CD4-positive, alpha-beta T cell (primary cell): ENCODE measurements at regions of chr18 and their contacts with region 1.

Region 1: GRCh38 chr18:35972197-35973052 is at the start of gene RMP24:
- DNase-seq: peak; percentile 86 to 97 (median 92)
- ATAC-seq: peak; percentile 82
- H3K4me3 ChIP-seq: peak within 1 kb of the TSS; percentile 73
- H3K4me3 Mint-ChIP-seq: peak within 1 kb of the TSS; percentile 97
- H3K27ac ChIP-seq: peak within 1 kb of the TSS; percentile 84 to 88
- H3K27ac Mint-ChIP-seq: peak within 1 kb of the TSS; percentile 96
- H3K4me1 ChIP-seq: peaks cover 34% of the 10 kb centered on the region
- H3K4me1 Mint-ChIP-seq: peaks cover 72% of the 10 kb centered on the region
- H3K27me3 ChIP-seq: no peaks in the 10 kb centered on the region
- H3K27me3 Mint-ChIP-seq: no peaks in the 10 kb centered on the region
- CTCF ChIP-seq: no peak

Region 2: DNA sequence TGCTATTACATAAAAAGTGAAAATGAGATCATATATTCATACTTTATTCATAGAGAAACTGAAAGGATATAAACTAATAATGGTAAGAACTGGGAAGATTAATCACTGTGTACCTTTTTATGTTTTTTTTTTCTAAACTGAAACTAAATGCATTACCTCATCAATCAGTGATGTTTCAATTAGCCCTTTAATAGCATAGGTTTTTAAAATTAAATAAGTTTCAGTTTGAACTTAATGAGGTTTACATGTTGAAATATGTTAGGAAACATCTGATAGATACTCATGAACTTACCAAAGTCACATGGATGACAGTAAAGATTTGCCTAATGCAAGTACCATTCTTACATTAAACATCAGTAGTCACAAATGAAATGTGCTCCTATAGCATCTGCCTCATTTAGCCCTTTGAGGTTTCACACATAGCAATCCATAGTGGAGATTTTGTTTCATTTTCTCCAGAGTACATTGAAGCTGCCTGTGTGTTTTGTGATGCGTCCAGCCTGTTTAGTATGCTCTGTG is 922.3 kb before region 1 on chr18:
- CTCF ChIA-PET with region 1: no interaction called
- POLR2A ChIA-PET with region 1: no interaction called
- intact Hi-C with region 1: loop called in 1 of 2 experiments (anchors 10 kb)
- DNase-seq: peak in 1 of 14 experiments; percentile 28
- ATAC-seq: peak; percentile 15
- H3K4me3 ChIP-seq: no peak overlapping the region
- H3K4me3 Mint-ChIP-seq: peak overlapping the region; percentile 83
- H3K27ac ChIP-seq: no peak overlapping the region
- H3K27ac Mint-ChIP-seq: peak overlapping the region; percentile 83
- H3K4me1 ChIP-seq: peaks cover 34% of the 10 kb centered on the region
- H3K4me1 Mint-ChIP-seq: peaks cover 88% of the 10 kb centered on the region
- H3K27me3 ChIP-seq: no peaks in the 10 kb centered on the region
- H3K27me3 Mint-ChIP-seq: no peaks in the 10 kb centered on the region
- CTCF ChIP-seq: no peak

Region 3: GRCh38 chr18:35290073-35290735 is 682.2 kb before region 1 on chr18 and contains the start of gene ZSCAN30:
- CTCF ChIA-PET with region 1: no interaction called
- POLR2A ChIA-PET with region 1: interaction called, 4 read pairs
- intact Hi-C with region 1: loop called in 1 of 2 experiments (anchors 5 kb)
- DNase-seq: peak; percentile 93 to 98 (median 96)
- ATAC-seq: peak; percentile 90
- H3K4me3 ChIP-seq: peak within 1 kb of the TSS; percentile 92
- H3K4me3 Mint-ChIP-seq: peak within 1 kb of the TSS; percentile 99
- H3K27ac ChIP-seq: peak within 1 kb of the TSS; percentile 55 to 87
- H3K27ac Mint-ChIP-seq: peak within 1 kb of the TSS; percentile 96
- H3K4me1 ChIP-seq: peaks cover 31% of the 10 kb centered on the region
- H3K4me1 Mint-ChIP-seq: peaks cover 78% of the 10 kb centered on the region
- H3K27me3 ChIP-seq: no peaks in the 10 kb centered on the region
- H3K27me3 Mint-ChIP-seq: no peaks in the 10 kb centered on the region
- CTCF ChIP-seq: no peak
- total RNA-seq, gene ZSCAN30: 9.6 to 11.6 TPM

Region 4: GRCh38 chr18:35580701-35581539 is 391.5 kb before region 1 on chr18:
- CTCF ChIA-PET with region 1: no interaction called
- POLR2A ChIA-PET with region 1: interaction called, 5 read pairs
- intact Hi-C with region 1: loop called in 1 of 2 experiments (anchors 5 kb)
- DNase-seq: peak; percentile 21 to 84 (median 44)
- ATAC-seq: peak; percentile 75
- H3K4me3 ChIP-seq: peak overlapping the region; percentile 55
- H3K4me3 Mint-ChIP-seq: peak overlapping the region; percentile 63
- H3K27ac ChIP-seq: peak overlapping the region; percentile 26 to 42
- H3K27ac Mint-ChIP-seq: no peak overlapping the region
- H3K4me1 ChIP-seq: peaks cover 18% of the 10 kb centered on the region
- H3K4me1 Mint-ChIP-seq: peaks cover 35% of the 10 kb centered on the region
- H3K27me3 ChIP-seq: no peaks in the 10 kb centered on the region
- H3K27me3 Mint-ChIP-seq: peaks cover 13% of the 10 kb centered on the region
- CTCF ChIP-seq: no peak

Region 5: DNA sequence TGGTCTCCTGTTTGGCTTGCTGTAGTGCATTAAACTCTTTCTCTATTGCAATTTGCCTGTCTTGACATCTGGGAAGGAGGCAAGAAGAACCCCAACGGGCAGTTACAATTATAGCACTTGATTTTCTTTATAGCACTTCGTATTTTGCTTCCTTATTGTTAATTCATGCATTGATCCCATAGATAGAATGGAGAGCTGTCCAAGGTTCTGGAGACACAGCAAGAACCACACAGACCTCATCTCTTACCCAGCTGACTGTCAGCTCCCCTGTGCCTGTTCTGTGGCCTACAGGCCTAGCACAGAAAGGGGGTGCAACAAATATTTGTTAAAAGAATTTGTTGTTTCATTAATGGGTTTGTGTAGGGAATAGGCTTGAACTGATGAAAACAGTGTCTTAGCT is 196.5 kb before region 1 on chr18:
- CTCF ChIA-PET with region 1: no interaction called
- POLR2A ChIA-PET with region 1: no interaction called
- intact Hi-C with region 1: no loop called
- DNase-seq: no peak
- ATAC-seq: no peak
- H3K4me3 ChIP-seq: no peak overlapping the region
- H3K4me3 Mint-ChIP-seq: no peak overlapping the region
- H3K27ac ChIP-seq: no peak overlapping the region
- H3K27ac Mint-ChIP-seq: no peak overlapping the region
- H3K4me1 ChIP-seq: no peaks in the 10 kb centered on the region
- H3K4me1 Mint-ChIP-seq: no peaks in the 10 kb centered on the region
- H3K27me3 ChIP-seq: peaks cover 0 to 3% of the 10 kb centered on the region in 2 experiments
- H3K27me3 Mint-ChIP-seq: peaks cover 15% of the 10 kb centered on the region
- CTCF ChIP-seq: no peak

Region 6: GRCh38 chr18:36067055-36067957 is 94.9 kb after region 1 on chr18 and contains the start of gene RPRD1A:
- CTCF ChIA-PET with region 1: no interaction called
- POLR2A ChIA-PET with region 1: interaction called, 24 read pairs
- intact Hi-C with region 1: loop called (anchors 1 to 2 kb)
- DNase-seq: peak; percentile 92 to 98 (median 96)
- ATAC-seq: peak; percentile 94
- H3K4me3 ChIP-seq: peak within 1 kb of the TSS; percentile 96
- H3K4me3 Mint-ChIP-seq: peak within 1 kb of the TSS; percentile 91
- H3K27ac ChIP-seq: peak within 1 kb of the TSS; percentile 65 to 86
- H3K27ac Mint-ChIP-seq: peak within 1 kb of the TSS; percentile 91
- H3K4me1 ChIP-seq: peaks cover 17% of the 10 kb centered on the region
- H3K4me1 Mint-ChIP-seq: peaks cover 46% of the 10 kb centered on the region
- H3K27me3 ChIP-seq: no peaks in the 10 kb centered on the region
- H3K27me3 Mint-ChIP-seq: no peaks in the 10 kb centered on the region
- CTCF ChIP-seq: no peak
- total RNA-seq, gene RPRD1A: 21.8 to 25.1 TPM

Region 7: DNA sequence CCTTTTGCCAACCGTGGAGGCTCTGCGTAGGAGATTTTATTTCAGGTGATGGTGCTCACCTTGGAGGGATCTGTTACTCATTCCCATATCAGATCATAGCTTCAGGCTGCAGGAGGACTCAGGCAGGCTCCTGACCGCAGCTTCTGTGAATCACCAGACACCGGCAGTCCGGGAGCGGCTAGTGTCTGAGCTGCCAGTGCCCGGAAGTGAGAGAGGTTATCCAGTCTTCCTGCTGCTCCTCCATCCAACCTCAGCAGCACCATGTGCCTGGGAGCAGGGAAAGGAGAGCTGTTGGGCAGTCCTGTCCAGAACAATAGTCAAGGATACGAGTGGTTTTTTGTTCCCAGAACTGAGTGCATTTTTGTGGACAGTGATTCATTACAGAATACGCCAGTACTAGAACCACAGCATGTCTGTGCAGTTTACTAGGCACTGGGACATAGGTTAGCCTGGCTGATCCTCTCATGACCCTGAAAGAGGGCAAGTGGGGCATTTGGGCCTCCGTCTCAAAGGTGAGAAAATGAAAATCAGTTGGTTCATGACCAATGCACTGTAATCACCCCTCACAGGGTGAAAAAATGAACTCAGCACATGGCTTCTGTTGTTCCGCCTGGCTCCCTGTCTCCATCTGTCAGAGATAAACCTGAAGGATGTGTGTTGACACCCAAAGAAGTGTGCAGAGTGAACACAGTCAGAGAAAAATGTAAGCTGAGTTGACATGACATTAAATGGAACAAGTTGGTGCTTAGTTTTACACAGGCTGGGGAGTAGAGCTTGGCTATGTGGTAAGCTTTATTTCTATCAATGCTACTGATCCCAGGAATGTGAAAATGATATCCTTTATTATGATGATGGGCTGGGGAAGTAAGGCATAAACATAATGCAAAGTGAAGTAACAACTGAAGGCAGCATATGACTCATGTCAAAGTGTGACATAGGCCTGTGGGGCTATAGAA is 337.3 kb after region 1 on chr18:
- CTCF ChIA-PET with region 1: no interaction called
- POLR2A ChIA-PET with region 1: no interaction called
- intact Hi-C with region 1: no loop called
- DNase-seq: no peak
- ATAC-seq: no peak
- H3K4me3 ChIP-seq: no peak overlapping the region
- H3K4me3 Mint-ChIP-seq: no peak overlapping the region
- H3K27ac ChIP-seq: no peak overlapping the region
- H3K27ac Mint-ChIP-seq: no peak overlapping the region
- H3K4me1 ChIP-seq: no peaks in the 10 kb centered on the region
- H3K4me1 Mint-ChIP-seq: no peaks in the 10 kb centered on the region
- H3K27me3 ChIP-seq: peaks cover 24 to 27% of the 10 kb centered on the region in 2 experiments
- H3K27me3 Mint-ChIP-seq: peaks cover 74% of the 10 kb centered on the region
- CTCF ChIP-seq: no peak

Region 8: GRCh38 chr18:36828630-36829361 is 856.4 kb after region 1 on chr18 and contains the starts of genes KIAA1328 and TPGS2:
- CTCF ChIA-PET with region 1: no interaction called
- POLR2A ChIA-PET with region 1: no interaction called
- intact Hi-C with region 1: loop called (anchors 5 kb)
- DNase-seq: peak; percentile 68 to 96 (median 83)
- ATAC-seq: peak; percentile 90
- H3K4me3 ChIP-seq: peak within 1 kb of the TSS; percentile 86
- H3K4me3 Mint-ChIP-seq: peak within 1 kb of the TSS; percentile 87
- H3K27ac ChIP-seq: peak within 1 kb of the TSS; percentile 58 to 78
- H3K27ac Mint-ChIP-seq: peak within 1 kb of the TSS; percentile 73
- H3K4me1 ChIP-seq: peaks cover 24% of the 10 kb centered on the region
- H3K4me1 Mint-ChIP-seq: peaks cover 60% of the 10 kb centered on the region
- H3K27me3 ChIP-seq: no peaks in the 10 kb centered on the region
- H3K27me3 Mint-ChIP-seq: no peaks in the 10 kb centered on the region
- CTCF ChIP-seq: peak; percentile 63
- total RNA-seq, gene KIAA1328: 8.7 to 9.4 TPM
- total RNA-seq, gene TPGS2: 16.4 to 19.0 TPM